Posterior cingulate gyrus (tissue), 11 donors: ENCODE measurements at regions of chr5 and their contacts with region 1.

Region 1: GRCh38 chr5:177454397-177455035 is 7.9 kb downstream of the PRR7 start:
- DNase-seq: peak; percentile 80 to 98 (median 90)

Region 2: GRCh38 chr5:177311723-177312648 is 142.5 kb before region 1 on chr5 and contains the start of gene MXD3:
- intact Hi-C with region 1: loop called (anchors 10 kb)
- DNase-seq: peak; percentile 88 to 99 (median 94)

Region 3: GRCh38 chr5:177425801-177426565 is 28.5 kb before region 1 on chr5:
- intact Hi-C with region 1: loop called (anchors 2 kb)
- DNase-seq: peak; percentile 99 to 100 (median 100)

Region 4: GRCh38 chr5:177497292-177498033 is 42.9 kb after region 1 on chr5 and contains the start of gene PDLIM7:
- intact Hi-C with region 1: loop called (anchors 1 kb)
- DNase-seq: peak; percentile 67 to 98 (median 86)